Motor neuron (in vitro differentiated cells): ENCODE measurements at regions of chr4 and their contacts with region 1.

Region 1: DNA sequence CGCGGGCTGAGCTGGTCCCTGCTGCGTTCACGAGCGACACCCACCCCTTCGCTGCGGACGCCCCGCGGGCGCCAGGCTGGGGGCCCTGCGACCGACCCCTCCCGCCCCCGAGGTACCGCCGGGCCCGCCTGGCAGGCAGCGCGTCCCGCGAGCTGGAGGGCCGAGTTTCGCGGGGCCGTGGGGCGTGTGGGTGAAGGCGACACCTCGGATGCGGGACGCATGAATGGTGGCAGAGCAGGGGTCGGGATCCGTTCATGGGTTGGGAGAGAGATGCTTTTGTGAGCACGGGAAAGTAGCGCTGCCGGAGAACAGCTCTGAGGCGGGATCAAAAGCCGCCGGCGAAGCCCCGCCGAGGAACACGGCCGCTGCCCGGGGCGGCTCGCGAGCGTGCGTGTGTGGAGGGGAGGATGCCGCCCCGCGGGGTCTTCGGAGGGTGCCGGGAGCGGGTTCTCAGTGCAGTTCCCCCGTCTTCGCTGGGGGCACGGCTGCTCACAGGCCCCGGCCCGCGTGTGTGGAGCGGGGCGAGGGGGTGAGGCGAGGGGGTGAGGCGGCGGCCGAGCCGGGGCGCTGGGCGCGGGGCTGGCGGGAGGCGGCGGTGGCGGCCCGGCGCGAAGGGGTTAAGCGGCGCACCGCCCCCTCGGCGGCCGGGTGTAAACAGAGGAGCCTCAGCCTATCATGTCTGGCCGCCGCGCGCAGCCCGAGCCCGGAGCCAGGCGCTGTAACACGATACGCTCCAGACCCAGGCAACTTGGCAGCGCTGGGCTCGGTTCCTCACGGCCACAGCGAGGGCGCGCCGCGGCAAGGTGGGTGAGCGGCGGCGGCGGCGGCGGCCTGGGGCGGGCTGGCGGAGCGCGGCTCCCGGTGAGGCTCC is 205.3 kb downstream of the TENM3 start:
- ATAC-seq: peak; percentile 92 to 98 (median 94)
- H3K4me3 ChIP-seq: peak overlapping the region; percentile 52 to 66 (median 64)
- H3K27ac ChIP-seq: peak overlapping the region; percentile 82 to 83
- H3K4me1 ChIP-seq: peaks cover 0 to 11% of the 10 kb centered on the region in 2 donors

Region 2: DNA sequence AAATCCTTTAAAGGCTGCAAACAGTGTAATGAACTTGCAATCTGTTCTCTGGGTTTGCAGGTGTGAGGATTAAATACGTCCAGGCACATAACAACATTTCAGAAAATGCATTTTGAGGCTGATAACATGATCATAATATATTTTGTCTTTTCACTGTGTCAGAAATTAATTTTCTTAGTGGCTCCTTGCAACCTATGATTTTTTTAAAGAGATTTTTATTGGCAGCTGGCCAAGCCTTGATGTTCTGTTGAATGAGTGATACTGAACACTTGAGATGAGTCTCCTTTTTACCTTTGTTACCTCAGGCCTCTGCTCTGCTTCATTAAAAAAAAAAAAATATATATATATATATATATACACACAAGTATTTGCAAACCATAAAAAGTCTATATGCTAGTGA is 273.5 kb before region 1 on chr4:
- in situ Hi-C with region 1: loop called in 1 of 9 experiments (anchors 25 kb)
- ATAC-seq: no peak
- H3K4me3 ChIP-seq: no peak overlapping the region
- H3K27ac ChIP-seq: no peak overlapping the region
- H3K4me1 ChIP-seq: peaks cover 4 to 32% of the 10 kb centered on the region in 2 donors

Region 3: GRCh38 chr4:182778222-182778982 is 329.9 kb after region 1 on chr4:
- in situ Hi-C with region 1: loop called in 1 of 9 experiments (anchors 25 kb)
- ATAC-seq: peak in 2 of 8 experiments; percentile 18 to 27
- H3K4me3 ChIP-seq: no peak overlapping the region
- H3K27ac ChIP-seq: no peak overlapping the region
- H3K4me1 ChIP-seq: no peaks in the 10 kb centered on the region

Region 4: DNA sequence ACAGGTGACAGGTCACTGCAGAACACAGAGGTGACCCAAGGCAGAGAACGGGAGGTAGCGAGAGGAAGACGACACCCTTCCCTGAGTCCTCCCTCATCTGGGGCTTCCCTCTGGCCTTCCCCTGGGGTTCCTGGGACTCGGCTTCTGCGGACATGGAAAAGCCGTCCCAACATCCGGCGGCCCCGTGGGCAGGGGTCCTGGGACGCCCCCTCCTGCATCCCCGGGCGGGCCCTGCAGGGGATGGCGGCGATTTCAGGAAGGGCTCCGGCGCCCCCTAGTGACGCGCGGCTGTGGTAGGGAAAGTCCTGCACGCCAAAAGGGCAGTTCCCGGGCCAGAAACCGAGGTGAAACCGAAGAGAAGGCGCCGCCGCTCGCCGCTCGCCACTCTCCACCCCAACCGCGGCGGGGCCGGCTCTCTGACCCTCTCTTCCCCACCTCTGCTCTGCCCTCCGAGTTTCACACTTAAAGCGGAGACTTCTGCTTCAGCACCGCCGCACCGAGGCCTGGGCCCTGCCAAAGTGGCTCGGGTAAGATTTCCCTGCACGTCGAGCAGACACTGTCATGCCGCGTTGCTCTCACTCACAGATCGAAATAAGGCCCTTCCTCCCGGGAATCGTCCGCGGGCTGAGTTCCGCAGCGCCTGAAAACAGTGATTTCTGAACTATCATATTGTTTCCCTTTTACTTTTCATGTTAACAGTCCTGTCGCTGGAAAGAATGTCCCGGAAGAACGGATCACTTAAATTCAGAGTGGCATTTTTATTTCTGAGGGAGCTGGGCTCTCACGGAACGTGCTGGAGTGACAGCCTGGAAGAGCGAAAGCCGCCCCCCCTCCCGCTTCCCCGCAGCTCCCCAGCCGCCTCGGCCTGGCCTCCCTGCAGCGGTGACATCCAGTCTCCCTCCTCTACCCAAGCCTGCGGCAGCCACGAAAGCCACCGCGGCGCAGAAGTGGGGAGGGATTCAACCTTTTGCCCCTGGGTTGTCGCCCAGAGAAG is 358.0 kb after region 1 on chr4:
- in situ Hi-C with region 1: loop called in 1 of 9 experiments (anchors 25 kb)
- ATAC-seq: peak; percentile 83 to 95 (median 89)
- H3K4me3 ChIP-seq: peak overlapping the region; percentile 2 to 28 (median 19)
- H3K27ac ChIP-seq: peak overlapping the region; percentile 17 to 18
- H3K4me1 ChIP-seq: peaks cover 3 to 15% of the 10 kb centered on the region in 2 donors